ENCODE measurements at regions of chr12 and their contacts with region 1.

Region 1: DNA sequence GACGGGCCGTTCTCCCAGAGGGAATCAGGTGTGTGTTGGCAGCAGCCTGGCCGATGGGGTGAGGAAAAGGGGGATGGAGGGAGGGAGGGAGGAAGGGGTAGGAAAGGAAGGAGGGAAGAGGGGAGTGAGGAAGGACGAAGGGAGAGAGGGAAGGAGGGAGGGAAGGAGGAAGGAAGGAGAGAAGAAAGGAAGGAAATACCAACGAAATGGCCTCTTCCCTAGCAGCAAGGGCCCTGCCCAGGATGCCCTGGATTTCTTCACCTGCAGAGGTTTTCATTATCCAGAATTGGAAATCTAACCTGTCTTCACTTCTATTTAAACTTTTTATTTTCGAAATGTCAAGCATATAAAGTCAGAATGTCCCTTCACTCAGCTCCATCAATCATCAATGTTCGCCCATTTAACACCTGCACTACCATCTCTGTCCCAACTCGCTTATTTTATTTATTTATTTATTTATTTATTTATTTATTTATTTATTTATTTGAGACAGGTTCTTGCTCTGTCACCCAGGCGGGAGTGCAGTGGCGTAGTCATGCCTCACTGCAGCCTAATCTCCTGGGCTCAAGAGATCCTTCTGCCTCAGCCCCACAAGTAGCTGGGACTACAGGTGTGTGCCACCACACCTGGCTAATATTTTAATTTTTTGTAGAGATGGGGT is 70.7 kb downstream of the ACACB start:
- DNase-seq: no peak

Region 2: GRCh38 chr12:109139791-109140190 is 47.3 kb before region 1 on chr12:
- intact Hi-C with region 1: loop called in 1 of 2 experiments (anchors 1 kb)
- DNase-seq: no peak

Region 3: GRCh38 chr12:109154451-109155438 is 32.4 kb before region 1 on chr12:
- intact Hi-C with region 1: no loop called
- DNase-seq: peak; percentile 96

Measured in posterior vena cava (tissue), 2 donors.